K562 (cell line): ENCODE measurements at regions of chr3 and their contacts with region 1.

Region 1: DNA sequence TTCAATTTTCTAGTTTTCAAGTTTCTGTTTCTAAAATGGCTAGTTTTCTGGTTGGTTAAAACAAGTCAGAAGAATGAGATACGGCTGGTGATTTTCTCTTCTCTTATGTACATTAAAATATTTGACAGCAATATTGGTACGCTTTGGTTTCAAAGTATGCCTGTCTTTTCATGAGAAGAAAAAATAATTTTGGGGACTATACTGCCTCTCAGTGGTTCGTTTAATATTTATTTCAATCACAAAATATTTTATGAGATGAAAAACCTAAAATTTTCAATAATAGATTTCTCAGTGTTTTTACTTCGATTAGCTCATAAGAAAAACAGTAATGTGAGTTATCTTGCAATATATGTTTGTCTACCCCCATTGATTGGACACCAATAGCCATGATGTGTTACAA is 72.8 kb upstream of the AADACL2 start:
- DNase-seq: no peak
- ATAC-seq: no peak
- H3K4me3 ChIP-seq: no peak overlapping the region
- H3K27ac ChIP-seq: no peak overlapping the region
- H3K4me1 ChIP-seq: no peaks in the 10 kb centered on the region
- H3K27me3 ChIP-seq: no peaks in the 10 kb centered on the region
- CTCF ChIP-seq: peak in 1 of 3 experiments; percentile 35; a peak in 2 of 6 replicates
- EP300 ChIP-seq: no peak
- POLR2A ChIP-seq: no peak
- RAD21 ChIP-seq: peak in 1 of 2 experiments; percentile 61; a peak in 3 of 4 replicates

Region 2: GRCh38 chr3:151439652-151440129 is 221.2 kb before region 1 on chr3:
- CTCF ChIA-PET with region 1: interaction called, 4 read pairs
- POLR2A ChIA-PET with region 1: no interaction called
- in situ Hi-C with region 1: no loop called
- intact Hi-C with region 1: loop called (anchors 1 kb)
- DNase-seq: peak; percentile 40 to 67 (median 44)
- ATAC-seq: peak; percentile 91
- H3K4me3 ChIP-seq: no peak overlapping the region
- H3K27ac ChIP-seq: no peak overlapping the region
- H3K4me1 ChIP-seq: no peaks in the 10 kb centered on the region
- H3K27me3 ChIP-seq: no peaks in the 10 kb centered on the region; a peak in 1 of 5 replicates
- CTCF ChIP-seq: peak; percentile 54 to 75 (median 71); a peak in 5 of 6 replicates
- EP300 ChIP-seq: no peak
- POLR2A ChIP-seq: no peak
- RAD21 ChIP-seq: peak; percentile 83 to 91

Region 3: DNA sequence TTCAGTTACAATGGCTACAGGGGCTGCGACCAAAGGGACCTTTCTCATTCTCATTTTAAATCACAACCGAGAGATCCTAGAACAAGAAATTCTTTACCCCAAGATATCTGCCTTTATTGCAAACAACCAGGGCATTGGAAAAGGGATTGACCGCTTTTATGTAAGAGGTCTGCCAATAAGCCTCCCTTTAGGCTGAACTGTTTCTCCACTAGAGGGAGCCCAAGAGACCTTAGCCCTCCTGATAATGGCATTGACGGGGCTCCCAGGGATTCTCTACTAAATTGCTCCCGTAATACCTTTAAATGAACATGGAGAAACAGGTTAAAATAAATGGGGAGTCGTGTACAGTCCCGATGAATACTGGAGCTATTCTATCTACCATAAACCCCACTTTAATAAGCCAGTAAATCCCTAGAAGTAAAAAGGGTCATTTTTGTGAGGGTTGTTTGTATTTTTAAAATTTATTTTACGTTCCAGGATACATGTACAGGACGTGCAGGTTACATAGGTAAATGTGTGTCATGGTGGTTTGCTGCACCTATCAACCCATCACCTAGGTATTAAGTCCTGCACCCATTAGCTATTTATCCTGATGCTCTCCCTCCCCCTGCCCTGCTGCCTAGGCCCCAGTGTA is 192.5 kb before region 1 on chr3:
- CTCF ChIA-PET with region 1: interaction called, 6 read pairs
- POLR2A ChIA-PET with region 1: no interaction called
- in situ Hi-C with region 1: no loop called
- intact Hi-C with region 1: loop called (anchors 2 kb)
- DNase-seq: peak; percentile 58 to 81 (median 66)
- ATAC-seq: peak; percentile 95
- H3K4me3 ChIP-seq: no peak overlapping the region
- H3K27ac ChIP-seq: no peak overlapping the region
- H3K4me1 ChIP-seq: no peaks in the 10 kb centered on the region
- H3K27me3 ChIP-seq: no peaks in the 10 kb centered on the region; a peak in 1 of 5 replicates
- CTCF ChIP-seq: peak; percentile 72 to 77 (median 73)
- EP300 ChIP-seq: no peak
- POLR2A ChIP-seq: no peak
- RAD21 ChIP-seq: peak; percentile 67 to 76

Region 4: DNA sequence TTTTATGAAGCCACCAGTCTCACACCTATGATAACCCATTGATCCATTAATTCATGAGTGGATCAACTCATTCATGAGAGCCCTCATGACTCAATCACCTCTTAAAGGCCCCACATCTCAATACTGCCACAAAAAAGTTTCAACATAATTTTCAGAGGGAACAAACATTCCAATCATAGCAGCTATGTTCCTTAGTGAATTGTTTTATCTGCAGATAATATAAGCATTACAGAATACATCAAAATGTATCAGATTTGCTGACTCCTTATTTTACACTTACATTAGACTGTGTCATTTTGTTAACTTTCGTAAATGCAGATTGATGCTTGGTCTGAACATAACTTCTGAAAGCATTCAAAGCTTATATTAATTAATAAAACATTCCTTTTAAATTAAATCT is 452.5 kb after region 1 on chr3:
- CTCF ChIA-PET with region 1: no interaction called
- POLR2A ChIA-PET with region 1: no interaction called
- in situ Hi-C with region 1: no loop called
- intact Hi-C with region 1: no loop called
- DNase-seq: no peak
- ATAC-seq: no peak
- H3K4me3 ChIP-seq: no peak overlapping the region
- H3K27ac ChIP-seq: no peak overlapping the region
- H3K4me1 ChIP-seq: peaks cover 0 to 3% of the 10 kb centered on the region in 2 experiments; a peak in 1 of 5 replicates
- H3K27me3 ChIP-seq: no peaks in the 10 kb centered on the region
- CTCF ChIP-seq: no peak
- EP300 ChIP-seq: no peak
- POLR2A ChIP-seq: no peak
- RAD21 ChIP-seq: no peak